PC-3 (cell line): ENCODE measurements at regions of chr6 and their contacts with region 1.

Region 1: DNA sequence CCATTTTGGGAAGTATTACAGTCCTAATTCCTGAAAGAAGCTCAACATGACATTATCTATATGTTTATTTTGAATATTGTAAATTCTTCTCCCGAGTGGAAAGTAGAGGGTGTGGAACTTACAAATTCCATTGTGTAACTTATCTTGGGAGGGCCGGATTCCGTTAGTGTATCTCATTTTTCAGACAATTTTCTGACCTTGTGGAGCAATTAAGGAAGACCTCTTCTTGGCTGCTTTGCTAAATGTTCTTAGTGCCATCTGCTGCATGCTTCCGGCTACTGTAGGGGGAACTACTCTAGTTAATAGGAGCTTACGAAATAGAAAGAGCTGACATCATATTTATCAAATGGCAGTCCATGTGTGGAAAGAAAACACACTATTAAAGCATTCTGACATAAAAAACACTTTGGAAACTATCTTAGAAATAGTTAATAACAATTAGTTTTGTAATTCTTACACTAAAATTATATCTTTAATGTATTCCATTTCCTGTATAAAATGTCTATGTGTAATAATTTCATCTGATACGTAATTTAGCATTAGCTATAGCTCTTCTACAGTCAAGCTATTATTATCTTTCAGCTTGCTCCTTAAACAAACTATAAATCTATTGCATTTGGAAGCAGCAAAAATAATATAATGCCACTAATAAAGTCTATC is 41.5 kb upstream of the KCNQ5 start:
- DNase-seq: peak; percentile 68
- ATAC-seq: peak; percentile 71
- H3K4me3 ChIP-seq: no peak overlapping the region
- H3K27ac ChIP-seq: no peak overlapping the region
- H3K4me1 ChIP-seq: peaks cover 4% of the 10 kb centered on the region; the same call in 1 of the 2 replicates
- H3K27me3 ChIP-seq: no peaks in the 10 kb centered on the region
- CTCF ChIP-seq: peak; percentile 78

Region 2: DNA sequence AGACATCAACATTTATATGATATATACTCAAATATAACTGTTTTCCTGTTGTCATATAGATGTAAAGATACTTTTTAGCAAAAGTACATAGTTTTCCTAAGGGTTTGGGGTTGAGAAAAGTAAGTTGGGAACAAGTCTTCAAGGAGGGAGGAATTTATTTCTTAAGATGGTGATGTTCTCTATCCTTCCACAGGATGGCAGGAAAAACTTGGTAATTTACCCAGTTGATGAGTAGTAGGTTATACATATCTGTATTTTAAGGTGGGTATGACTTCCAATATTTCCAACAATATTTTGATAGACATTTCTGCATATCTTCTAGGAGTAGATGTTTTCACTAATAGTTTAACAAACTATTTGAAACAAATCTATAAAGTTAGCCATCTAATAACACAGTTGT is 439.6 kb before region 1 on chr6:
- CTCF ChIA-PET with region 1: no interaction called
- POLR2A ChIA-PET with region 1: no interaction called
- intact Hi-C with region 1: loop called (anchors 10 kb)
- DNase-seq: peak; percentile 33
- ATAC-seq: no peak
- H3K4me3 ChIP-seq: no peak overlapping the region
- H3K27ac ChIP-seq: no peak overlapping the region
- H3K4me1 ChIP-seq: no peaks in the 10 kb centered on the region
- H3K27me3 ChIP-seq: no peaks in the 10 kb centered on the region
- CTCF ChIP-seq: peak; percentile 44; the same call in 1 of the 2 replicates

Region 3: DNA sequence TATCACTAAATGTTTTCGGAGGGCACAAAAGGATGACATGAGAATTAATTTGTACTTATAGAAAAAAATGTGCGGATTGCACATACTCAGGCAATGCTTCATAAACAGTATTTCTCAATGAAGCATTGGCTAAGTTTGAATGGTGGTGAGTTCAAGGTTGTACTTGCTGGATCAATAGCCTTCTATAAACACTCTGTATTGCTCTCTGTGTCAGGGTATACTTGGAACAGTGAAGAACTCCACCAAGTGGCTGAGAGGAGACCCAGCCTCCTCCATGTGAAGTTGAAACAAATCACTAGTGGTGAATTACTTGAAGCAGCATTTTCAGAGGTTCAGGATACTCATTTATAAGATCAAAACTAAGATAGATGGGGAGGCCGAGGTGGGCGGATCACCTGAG is 333.5 kb before region 1 on chr6:
- CTCF ChIA-PET with region 1: no interaction called
- POLR2A ChIA-PET with region 1: no interaction called
- intact Hi-C with region 1: loop called (anchors 5 kb)
- DNase-seq: peak; percentile 22
- ATAC-seq: peak; percentile 71
- H3K4me3 ChIP-seq: no peak overlapping the region
- H3K27ac ChIP-seq: no peak overlapping the region
- H3K4me1 ChIP-seq: no peaks in the 10 kb centered on the region
- H3K27me3 ChIP-seq: no peaks in the 10 kb centered on the region
- CTCF ChIP-seq: peak; percentile 44

Region 4: DNA sequence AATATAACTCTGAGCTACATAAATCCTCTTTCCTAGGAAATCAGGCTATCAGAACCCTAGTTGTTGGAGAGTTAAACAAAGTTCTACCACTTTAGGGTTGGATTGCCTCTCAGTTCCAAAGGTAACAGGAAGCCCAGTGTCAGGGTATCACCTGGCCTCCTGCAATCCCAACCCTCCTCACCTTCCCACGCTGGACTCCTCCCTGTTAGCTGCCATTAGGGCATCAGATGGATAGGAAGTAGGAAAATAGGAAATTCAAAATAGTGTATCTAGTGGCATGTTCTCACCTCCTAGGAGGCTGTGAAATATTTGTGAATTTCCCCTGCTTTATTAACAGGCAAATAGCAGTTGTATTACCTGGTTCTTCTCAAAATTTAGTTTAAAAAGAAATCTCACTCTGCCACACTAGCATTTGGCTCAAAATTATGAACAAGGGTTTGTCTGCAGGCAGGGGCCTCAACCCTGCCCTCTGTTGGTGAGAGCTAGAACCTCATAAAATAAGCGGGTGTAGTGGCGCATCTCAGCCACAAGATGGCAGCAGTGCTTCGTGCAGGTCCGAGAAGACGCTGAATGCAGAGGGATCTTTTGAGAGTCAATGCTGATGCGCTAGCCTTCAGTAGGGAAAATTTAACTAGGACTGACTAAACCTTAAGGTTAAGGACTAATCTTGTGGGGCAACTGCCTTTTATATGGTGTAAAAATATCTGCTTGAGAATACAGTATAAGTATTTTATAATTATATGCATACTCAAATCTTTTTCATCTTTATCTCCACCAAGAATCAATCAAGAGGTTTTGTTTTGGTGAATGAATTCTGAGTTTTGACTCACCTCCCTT is 168.3 kb before region 1 on chr6:
- CTCF ChIA-PET with region 1: interaction called, 24 read pairs
- POLR2A ChIA-PET with region 1: interaction called, 34 read pairs
- intact Hi-C with region 1: loop called (anchors 5 kb)
- DNase-seq: peak; percentile 80
- ATAC-seq: peak; percentile 85
- H3K4me3 ChIP-seq: no peak overlapping the region
- H3K27ac ChIP-seq: no peak overlapping the region
- H3K4me1 ChIP-seq: peaks cover 7% of the 10 kb centered on the region
- H3K27me3 ChIP-seq: no peaks in the 10 kb centered on the region
- CTCF ChIP-seq: peak; percentile 99

Region 5: GRCh38 chr6:72425003-72425681 is 155.3 kb before region 1 on chr6:
- CTCF ChIA-PET with region 1: no interaction called
- POLR2A ChIA-PET with region 1: no interaction called
- intact Hi-C with region 1: loop called (anchors 5 kb)
- DNase-seq: peak; percentile 8
- ATAC-seq: no peak
- H3K4me3 ChIP-seq: no peak overlapping the region
- H3K27ac ChIP-seq: no peak overlapping the region
- H3K4me1 ChIP-seq: no peaks in the 10 kb centered on the region
- H3K27me3 ChIP-seq: no peaks in the 10 kb centered on the region
- CTCF ChIP-seq: no peak